ENCODE measurements at regions of chr17 and their contacts with region 1.

Region 1: DNA sequence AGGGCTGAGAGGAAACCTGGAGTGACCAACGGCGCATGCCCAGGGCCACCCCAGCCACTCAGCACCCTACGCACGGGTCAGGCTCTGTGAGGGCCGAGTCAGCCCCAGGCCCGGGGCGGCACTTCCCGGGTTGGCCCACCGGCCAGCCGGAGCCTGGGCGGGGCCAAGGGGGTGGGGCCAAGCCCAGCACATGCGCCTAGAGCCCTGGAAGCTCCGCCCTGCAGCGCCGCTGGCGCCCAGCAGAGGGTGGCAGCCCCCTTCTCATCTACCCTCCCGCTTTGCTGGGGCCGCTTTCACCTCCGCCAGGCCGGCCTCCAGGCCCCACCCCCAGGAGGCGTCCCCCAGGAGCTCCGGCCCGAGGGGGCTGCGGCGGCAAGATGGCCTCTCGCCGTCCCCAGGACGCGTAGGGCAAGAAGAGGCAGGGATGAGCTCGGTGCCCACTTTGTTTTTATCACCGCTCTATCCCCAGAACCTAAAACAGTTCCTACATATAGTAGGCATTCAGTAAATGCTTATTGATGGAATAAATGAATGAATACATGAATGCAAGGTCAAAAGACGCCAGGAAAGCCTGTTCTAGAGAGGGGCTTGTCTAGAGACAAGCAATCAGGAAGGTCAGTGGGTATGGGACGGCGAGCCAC is 31.3 kb downstream of the MYO18A start:
- DNase-seq: peak; percentile 96 to 97
- ATAC-seq: peak; percentile 96 to 99 (median 96)
- H3K4me3 ChIP-seq: peak overlapping the region; percentile 51
- H3K4me3 Mint-ChIP-seq: peak overlapping the region; percentile 84
- H3K27ac ChIP-seq: peak overlapping the region; percentile 86
- H3K27ac Mint-ChIP-seq: peak overlapping the region; percentile 88 to 90
- H3K4me1 ChIP-seq: peaks cover 24% of the 10 kb centered on the region
- H3K4me1 Mint-ChIP-seq: peaks cover 27 to 52% of the 10 kb centered on the region in 2 donors
- H3K27me3 ChIP-seq: no peaks in the 10 kb centered on the region
- H3K27me3 Mint-ChIP-seq: no peaks in the 10 kb centered on the region
- CTCF ChIP-seq: peak; percentile 95

Region 2: GRCh38 chr17:29180034-29180787 is 31.3 kb after region 1 on chr17 and contains the start of gene MYO18A:
- intact Hi-C with region 1: loop called (anchors 1 kb)
- DNase-seq: peak; percentile 76 to 90
- ATAC-seq: peak; percentile 98
- H3K4me3 ChIP-seq: peak within 1 kb of the TSS; percentile 12
- H3K4me3 Mint-ChIP-seq: peak within 1 kb of the TSS; percentile 61
- H3K27ac ChIP-seq: no peak within 1 kb of the TSS
- H3K27ac Mint-ChIP-seq: peak within 1 kb of the TSS in 1 of 2 donors; percentile 60
- H3K4me1 ChIP-seq: peaks cover 26% of the 10 kb centered on the region
- H3K4me1 Mint-ChIP-seq: peaks cover 19 to 29% of the 10 kb centered on the region in 2 donors
- H3K27me3 ChIP-seq: no peaks in the 10 kb centered on the region
- H3K27me3 Mint-ChIP-seq: peaks cover 0 to 3% of the 10 kb centered on the region in 2 donors
- CTCF ChIP-seq: peak; percentile 83
- total RNA-seq, gene MYO18A: 110 to 117 (median 115) TPM

Region 3: DNA sequence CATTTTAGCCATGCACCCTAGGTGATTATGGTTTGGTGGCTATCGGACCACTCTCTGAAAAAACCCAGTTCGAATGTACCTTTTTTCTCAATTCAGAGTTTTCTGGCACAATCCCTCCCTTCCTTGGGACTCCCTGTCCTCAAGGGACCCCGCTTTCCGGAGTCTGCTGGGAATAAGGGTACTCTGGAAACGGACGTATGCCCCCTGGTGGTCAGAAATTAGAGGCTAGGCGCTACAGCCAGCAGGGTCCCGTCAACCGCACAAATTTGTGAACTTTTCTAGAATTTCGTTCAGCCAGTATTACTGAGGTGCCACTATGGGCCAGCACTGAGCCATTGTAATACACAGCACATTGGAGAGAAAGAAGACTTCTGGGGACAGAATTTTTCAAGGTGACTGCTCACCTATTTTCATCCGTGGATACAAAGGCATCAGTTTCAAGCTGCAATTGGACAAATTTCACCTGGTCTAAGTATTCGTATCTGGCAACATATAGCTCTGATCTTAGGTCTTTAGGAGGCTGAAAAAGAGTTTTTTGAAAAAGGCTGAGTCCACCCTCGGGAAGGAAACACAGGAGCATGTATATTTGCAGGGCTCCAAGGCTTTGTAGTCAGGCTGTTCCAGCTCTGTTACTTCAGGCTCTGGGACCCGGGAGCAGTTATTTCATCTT is 70.6 kb after region 1 on chr17:
- intact Hi-C with region 1: loop called (anchors 1 kb)
- DNase-seq: peak; percentile 57 to 85
- ATAC-seq: peak; percentile 73 to 95 (median 94)
- H3K4me3 ChIP-seq: no peak overlapping the region
- H3K4me3 Mint-ChIP-seq: no peak overlapping the region
- H3K27ac ChIP-seq: no peak overlapping the region
- H3K27ac Mint-ChIP-seq: no peak overlapping the region
- H3K4me1 ChIP-seq: peaks cover 4% of the 10 kb centered on the region
- H3K4me1 Mint-ChIP-seq: peaks cover 0 to 5% of the 10 kb centered on the region in 2 donors
- H3K27me3 ChIP-seq: no peaks in the 10 kb centered on the region
- H3K27me3 Mint-ChIP-seq: peaks cover 0 to 2% of the 10 kb centered on the region in 2 donors
- CTCF ChIP-seq: peak; percentile 88